Activated B cell treated with CpG ODN at 0.5 μM for 24 hours (primary cell): ENCODE measurements at regions of chr22 and their contacts with region 1.

Region 1: GRCh38 chr22:40950962-40951794 is at the start of gene RBX1:
- DNase-seq: peak; percentile 96
- ATAC-seq: peak; percentile 83
- H3K4me3 Mint-ChIP-seq: peak within 1 kb of the TSS; percentile 100
- H3K27ac Mint-ChIP-seq: peak within 1 kb of the TSS; percentile 100
- H3K4me1 Mint-ChIP-seq: peaks cover 30% of the 10 kb centered on the region
- H3K27me3 Mint-ChIP-seq: no peaks in the 10 kb centered on the region
- CTCF ChIP-seq: no peak
- total RNA-seq, gene RBX1: 78.6 and 78.9 TPM in 2 replicates

Region 2: DNA sequence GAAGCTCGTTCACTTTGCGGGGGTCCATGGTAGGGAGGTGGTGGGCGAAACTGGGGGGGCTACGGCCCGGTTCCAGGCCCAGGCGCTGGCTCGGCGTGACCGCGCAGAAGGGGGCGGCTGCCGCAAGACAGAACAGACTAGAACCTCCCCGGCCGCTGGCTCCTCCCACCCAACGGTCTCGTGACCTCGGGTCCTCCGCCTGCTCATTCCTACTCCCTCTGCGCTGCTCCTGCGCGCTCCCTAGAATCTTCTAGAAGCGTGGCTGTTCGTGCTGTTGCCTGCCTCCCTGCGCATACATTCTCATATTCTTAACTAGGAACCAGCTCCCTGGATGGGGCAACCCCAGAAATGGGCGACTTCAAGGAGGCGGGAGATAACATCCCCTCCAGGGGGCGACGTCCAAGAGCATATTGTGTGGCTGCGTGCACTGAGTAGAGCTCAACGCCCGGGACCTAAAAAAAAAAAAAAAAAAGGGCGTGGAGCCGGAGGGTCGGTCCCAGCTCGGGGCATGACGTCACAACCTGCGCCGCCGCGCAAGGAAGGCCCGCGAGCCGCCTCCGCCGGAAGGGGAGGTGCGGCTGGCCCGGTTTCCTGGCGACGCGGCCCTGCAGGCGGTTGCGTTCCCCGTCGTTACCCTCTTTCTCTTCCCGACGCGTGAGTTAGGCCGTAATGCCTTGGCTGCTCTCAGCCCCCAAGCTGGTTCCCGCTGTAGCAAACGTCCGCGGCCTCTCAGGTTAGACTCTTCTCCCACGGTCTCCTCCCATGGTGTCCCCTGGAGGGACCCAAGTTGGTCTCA is 94.5 kb before region 1 on chr22 and contains the starts of genes ST13 and XPNPEP3:
- CTCF ChIA-PET with region 1: no interaction called
- POLR2A ChIA-PET with region 1: interaction called, 9 read pairs
- intact Hi-C with region 1: loop called (anchors 1 kb)
- DNase-seq: peak; percentile 96
- ATAC-seq: peak; percentile 90
- H3K4me3 Mint-ChIP-seq: peak within 1 kb of the TSS; percentile 98
- H3K27ac Mint-ChIP-seq: peak within 1 kb of the TSS; percentile 100
- H3K4me1 Mint-ChIP-seq: peaks cover 47% of the 10 kb centered on the region
- H3K27me3 Mint-ChIP-seq: no peaks in the 10 kb centered on the region
- CTCF ChIP-seq: no peak
- total RNA-seq, gene ST13: 183 and 221 TPM in 2 replicates
- total RNA-seq, gene XPNPEP3: 20.3 and 20.8 TPM in 2 replicates

Region 3: GRCh38 chr22:40965936-40966725 is 15.0 kb after region 1 on chr22:
- CTCF ChIA-PET with region 1: no interaction called
- POLR2A ChIA-PET with region 1: interaction called, 10 read pairs
- intact Hi-C with region 1: no loop called
- DNase-seq: no peak
- ATAC-seq: no peak
- H3K4me3 Mint-ChIP-seq: no peak overlapping the region
- H3K27ac Mint-ChIP-seq: no peak overlapping the region
- H3K4me1 Mint-ChIP-seq: peaks cover 9% of the 10 kb centered on the region
- H3K27me3 Mint-ChIP-seq: no peaks in the 10 kb centered on the region
- CTCF ChIP-seq: no peak

Region 4: DNA sequence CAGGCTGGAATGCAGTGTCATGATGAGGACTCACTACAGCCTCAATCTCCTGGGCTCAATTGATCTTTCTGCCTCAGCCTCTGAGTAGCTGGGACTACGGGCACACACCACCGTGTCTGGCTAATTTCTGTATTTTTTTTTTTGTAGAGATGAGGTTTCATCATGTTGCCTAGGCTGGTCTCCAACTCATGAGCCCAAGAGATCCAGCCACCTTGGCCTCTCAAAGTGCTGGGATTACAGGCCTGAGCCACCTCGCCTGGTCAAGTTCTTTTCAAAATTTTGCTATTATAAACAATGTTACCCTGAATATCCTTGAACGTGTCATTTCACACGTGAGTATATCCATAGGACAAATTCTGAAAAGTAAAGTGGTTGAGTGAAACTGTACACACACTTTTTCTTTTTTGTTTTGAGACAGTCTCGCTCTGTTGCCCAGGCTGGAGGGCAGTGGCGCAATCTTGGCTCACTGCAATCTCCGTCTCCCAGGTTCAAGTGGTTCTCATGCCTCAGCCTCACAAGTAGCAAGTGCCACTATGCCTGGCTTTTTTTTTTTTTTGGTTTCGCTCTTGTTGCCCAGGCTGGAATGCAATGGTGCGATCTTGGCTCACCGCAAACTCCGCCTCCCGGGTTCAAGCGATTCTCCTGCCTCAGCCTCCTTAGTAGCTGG is 119.6 kb after region 1 on chr22:
- CTCF ChIA-PET with region 1: no interaction called
- POLR2A ChIA-PET with region 1: interaction called, 77 read pairs
- intact Hi-C with region 1: loop called (anchors 1 kb)
- DNase-seq: no peak
- ATAC-seq: no peak
- H3K4me3 Mint-ChIP-seq: no peak overlapping the region
- H3K27ac Mint-ChIP-seq: no peak overlapping the region
- H3K4me1 Mint-ChIP-seq: peaks cover 33% of the 10 kb centered on the region
- H3K27me3 Mint-ChIP-seq: no peaks in the 10 kb centered on the region
- CTCF ChIP-seq: no peak

Region 5: GRCh38 chr22:41146573-41146972 is 195.4 kb after region 1 on chr22:
- CTCF ChIA-PET with region 1: no interaction called
- POLR2A ChIA-PET with region 1: no interaction called
- intact Hi-C with region 1: no loop called
- DNase-seq: no peak
- ATAC-seq: no peak
- H3K4me3 Mint-ChIP-seq: no peak overlapping the region
- H3K27ac Mint-ChIP-seq: no peak overlapping the region
- H3K4me1 Mint-ChIP-seq: no peaks in the 10 kb centered on the region
- H3K27me3 Mint-ChIP-seq: no peaks in the 10 kb centered on the region
- CTCF ChIP-seq: no peak

Region 6: DNA sequence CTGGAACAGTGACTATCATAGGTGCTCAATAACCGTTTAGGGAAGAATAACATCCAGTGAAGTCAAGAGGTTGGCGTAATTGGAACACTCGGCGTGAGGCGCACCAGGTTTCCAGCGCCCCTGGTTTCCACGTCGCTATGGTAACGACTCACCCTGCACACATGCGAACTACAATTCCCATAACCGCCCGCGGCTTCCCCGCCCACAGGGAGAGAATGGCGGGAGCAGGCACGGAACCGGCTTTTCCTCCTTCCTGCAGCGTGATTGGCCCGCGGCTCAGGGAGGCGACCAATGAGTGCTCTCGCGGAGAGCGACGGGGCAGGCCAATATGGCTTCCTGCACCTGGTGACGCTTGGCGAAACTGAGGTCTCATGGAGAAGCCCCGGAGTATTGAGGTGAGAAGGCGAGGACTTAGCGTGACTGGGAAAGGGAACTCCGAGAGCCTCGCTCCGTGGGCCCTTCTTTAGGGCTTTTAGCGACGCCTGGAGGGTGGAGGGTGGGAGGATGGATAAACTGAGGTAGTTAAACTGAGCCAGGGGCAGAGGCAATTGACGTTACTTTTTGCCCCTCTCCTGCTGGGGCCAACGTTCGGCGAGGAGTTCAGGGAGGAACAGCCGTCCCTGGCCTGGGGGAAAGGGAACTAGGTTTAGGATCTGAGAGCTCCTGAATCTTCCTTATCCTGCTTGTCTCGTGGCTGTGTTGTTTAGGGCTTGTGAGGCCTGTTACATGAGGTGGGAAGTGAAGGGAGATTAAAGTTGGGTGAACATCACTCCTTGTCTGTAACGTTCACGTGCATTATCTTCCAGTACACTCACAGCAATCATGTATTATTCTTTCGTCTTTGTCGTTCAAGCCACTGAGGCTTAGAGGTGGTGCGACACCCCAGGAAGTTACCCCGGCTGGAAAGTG is 254.1 kb after region 1 on chr22 and contains the start of gene L3MBTL2:
- CTCF ChIA-PET with region 1: no interaction called
- POLR2A ChIA-PET with region 1: no interaction called
- intact Hi-C with region 1: loop called (anchors 1 kb)
- DNase-seq: peak; percentile 96
- ATAC-seq: peak; percentile 100
- H3K4me3 Mint-ChIP-seq: peak within 1 kb of the TSS; percentile 90
- H3K27ac Mint-ChIP-seq: peak within 1 kb of the TSS; percentile 86
- H3K4me1 Mint-ChIP-seq: peaks cover 30% of the 10 kb centered on the region
- H3K27me3 Mint-ChIP-seq: peaks cover 9% of the 10 kb centered on the region
- CTCF ChIP-seq: no peak
- total RNA-seq, gene L3MBTL2: 39.9 and 42.3 TPM in 2 replicates

Region 7: DNA sequence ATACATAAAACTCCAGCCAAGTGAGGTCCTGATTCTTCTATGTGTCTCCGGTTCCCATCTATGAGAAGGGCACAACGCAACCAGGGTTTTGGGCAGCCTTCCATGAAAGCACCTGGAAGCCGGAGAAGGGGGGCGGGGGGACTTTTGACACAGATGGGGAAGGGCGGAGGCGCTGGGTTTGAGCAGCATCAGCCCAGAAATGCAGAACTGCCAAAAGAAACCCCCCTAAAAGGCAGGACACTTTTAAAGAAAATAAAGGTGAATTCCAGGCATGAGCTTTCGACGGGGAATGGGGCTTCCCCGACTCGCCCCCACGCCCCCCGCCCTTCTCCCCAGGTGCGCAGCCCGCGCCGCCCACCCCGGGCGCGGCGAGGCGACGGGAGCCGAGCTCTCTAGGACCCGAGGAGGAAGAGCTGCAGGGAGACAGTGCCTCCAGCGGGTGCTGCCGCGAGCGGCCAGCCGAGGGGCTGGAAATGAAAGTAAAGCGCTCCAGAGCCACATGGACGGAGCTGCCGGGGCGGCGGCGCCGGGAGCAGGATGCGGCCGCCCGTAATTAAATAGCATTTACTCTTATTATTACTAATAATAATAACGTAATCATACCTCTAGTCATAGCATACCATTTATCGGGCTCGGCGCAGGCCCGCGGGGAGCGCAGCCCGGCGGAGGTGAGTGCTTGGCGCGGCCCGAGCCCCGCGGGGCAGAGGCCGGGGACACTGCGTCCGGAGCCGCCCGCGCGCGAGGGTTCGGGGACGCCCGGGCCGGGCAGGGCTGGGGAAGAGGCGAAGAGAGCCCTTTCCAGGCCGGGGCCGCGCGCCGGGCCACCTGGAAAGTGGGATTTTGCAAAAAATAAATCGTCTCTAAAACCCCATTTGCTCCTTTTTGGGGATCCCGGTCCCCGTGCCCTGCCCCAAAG is 350.2 kb after region 1 on chr22 and contains the start of gene ZC3H7B:
- CTCF ChIA-PET with region 1: interaction called, 4 read pairs
- POLR2A ChIA-PET with region 1: interaction called, 3 read pairs
- intact Hi-C with region 1: loop called (anchors 1 kb)
- DNase-seq: peak; percentile 74
- ATAC-seq: peak; percentile 93
- H3K4me3 Mint-ChIP-seq: peak within 1 kb of the TSS; percentile 83
- H3K27ac Mint-ChIP-seq: peak within 1 kb of the TSS; percentile 92
- H3K4me1 Mint-ChIP-seq: peaks cover 30% of the 10 kb centered on the region
- H3K27me3 Mint-ChIP-seq: no peaks in the 10 kb centered on the region
- CTCF ChIP-seq: no peak
- total RNA-seq, gene ZC3H7B: 54.0 and 58.2 TPM in 2 replicates